ENCODE measurements at regions of chr6 and their contacts with region 1.

Region 1: DNA sequence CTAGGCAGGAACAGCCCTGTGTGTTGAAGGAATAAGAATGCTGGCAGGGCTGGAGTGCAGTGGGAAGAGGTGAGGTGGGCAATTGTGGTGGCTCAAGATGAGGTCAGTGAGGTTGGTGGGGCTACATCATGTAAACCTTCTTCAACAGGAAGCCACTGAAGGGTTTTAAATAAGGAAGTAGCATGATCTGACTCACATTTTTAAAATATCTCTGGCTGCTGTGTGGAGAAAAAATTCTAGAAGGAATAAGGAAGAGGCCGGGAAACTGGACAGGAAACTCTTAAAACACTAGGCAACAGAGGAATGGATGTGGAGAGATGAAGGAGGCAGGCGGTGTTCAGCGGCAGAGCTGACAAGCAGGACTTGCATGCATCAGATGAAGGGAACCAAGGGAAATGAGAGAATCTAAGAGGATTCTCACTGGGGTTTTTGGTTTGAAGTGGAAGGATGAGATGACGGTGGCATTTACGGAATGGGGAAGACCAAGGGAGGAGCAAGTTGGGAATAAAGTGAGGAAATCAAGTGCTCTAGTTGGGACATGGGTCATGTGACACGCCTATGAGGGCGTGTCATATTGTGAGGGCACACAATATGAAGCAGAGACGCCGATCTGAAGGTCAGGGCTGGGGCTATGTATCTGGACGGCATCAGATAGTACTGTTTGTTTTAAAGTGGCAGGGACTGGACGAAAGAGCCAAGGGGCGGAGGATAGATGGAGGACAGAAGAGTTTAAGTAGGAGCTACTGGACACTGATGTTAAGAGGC is 18.2 kb downstream of the TMEM242 start:
- DNase-seq: no peak
- ATAC-seq: no peak
- H3K4me3 Mint-ChIP-seq: no peak overlapping the region
- H3K27ac Mint-ChIP-seq: no peak overlapping the region
- H3K4me1 Mint-ChIP-seq: peaks cover 4% of the 10 kb centered on the region
- H3K27me3 Mint-ChIP-seq: no peaks in the 10 kb centered on the region

Region 2: GRCh38 chr6:155782320-155782731 is 1522.8 kb before region 1 on chr6:
- CTCF ChIA-PET with region 1: no interaction called
- POLR2A ChIA-PET with region 1: no interaction called
- intact Hi-C with region 1: loop called in 1 of 2 experiments (anchors 5 kb)
- DNase-seq: no peak
- ATAC-seq: no peak
- H3K4me3 Mint-ChIP-seq: no peak overlapping the region
- H3K27ac Mint-ChIP-seq: no peak overlapping the region
- H3K4me1 Mint-ChIP-seq: no peaks in the 10 kb centered on the region
- H3K27me3 Mint-ChIP-seq: no peaks in the 10 kb centered on the region

Region 3: GRCh38 chr6:157323255-157323965 is 18.3 kb after region 1 on chr6 and contains the start of gene TMEM242:
- CTCF ChIA-PET with region 1: no interaction called
- POLR2A ChIA-PET with region 1: no interaction called
- intact Hi-C with region 1: no loop called
- DNase-seq: peak; percentile 93
- ATAC-seq: peak; percentile 91
- H3K4me3 Mint-ChIP-seq: peak within 1 kb of the TSS; percentile 90
- H3K27ac Mint-ChIP-seq: peak within 1 kb of the TSS; percentile 87
- H3K4me1 Mint-ChIP-seq: peaks cover 30% of the 10 kb centered on the region
- H3K27me3 Mint-ChIP-seq: peaks cover 13% of the 10 kb centered on the region
- total RNA-seq, gene TMEM242: 4.7 to 7.7 TPM